IMR-90 (cell line): ENCODE measurements at regions of chr3 and their contacts with region 1.

Region 1: GRCh38 chr3:194315088-194315964 is 35.8 kb downstream of the CPN2 start:
- DNase-seq: peak; percentile 63
- ATAC-seq: peak; percentile 94
- H3K4me3 ChIP-seq: peak overlapping the region; percentile 35
- H3K27ac ChIP-seq: no peak overlapping the region
- H3K4me1 ChIP-seq: peaks cover 3% of the 10 kb centered on the region; the same call in 1 of the 2 replicates
- H3K27me3 ChIP-seq: peaks cover 62% of the 10 kb centered on the region
- CTCF ChIP-seq: peak; percentile 96
- POLR2A ChIP-seq: peak; percentile 67; the same call in 1 of the 2 replicates
- RAD21 ChIP-seq: peak; percentile 99

Region 2: DNA sequence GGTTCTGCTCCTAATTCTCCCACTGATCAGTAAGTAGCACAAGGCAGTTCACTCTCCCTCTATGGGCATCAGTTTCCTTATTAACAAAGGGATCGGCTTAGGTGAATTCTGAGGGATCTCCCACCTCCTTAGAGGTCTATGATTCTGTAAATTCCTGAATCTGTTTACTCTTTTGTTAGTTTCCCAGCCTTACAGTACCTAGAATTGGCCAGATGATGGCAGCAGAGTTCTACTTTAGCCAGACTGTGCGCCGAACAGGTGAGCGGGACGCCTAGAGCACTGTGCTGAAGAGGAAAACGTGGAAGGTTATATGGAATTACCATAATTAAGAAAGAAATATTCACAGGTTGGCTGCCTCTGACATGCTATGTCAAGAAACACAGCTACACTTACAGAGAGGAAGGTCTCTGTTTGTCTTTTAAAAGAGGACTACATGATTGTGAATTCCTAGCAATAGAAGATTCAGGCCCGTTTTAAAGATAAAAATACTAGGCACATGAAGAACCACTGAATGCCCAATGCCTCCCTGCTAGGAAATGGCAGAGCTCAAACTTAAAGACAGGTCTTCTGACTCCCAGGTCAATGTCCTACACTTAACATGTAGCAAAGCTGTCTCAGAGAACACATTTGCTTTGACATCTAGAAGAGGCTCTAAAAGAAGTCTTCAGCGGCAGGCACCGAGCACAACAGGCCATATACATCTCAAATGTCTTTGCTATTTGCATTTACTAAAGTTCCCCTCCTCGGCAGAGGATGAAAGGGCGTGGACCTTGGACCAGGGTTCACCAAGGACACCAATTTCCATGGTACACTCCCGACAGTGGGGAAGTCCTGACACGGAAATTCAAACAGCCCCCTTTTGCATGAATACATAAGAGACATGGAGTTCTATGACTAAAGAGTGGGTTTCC is 1847.8 kb before region 1 on chr3:
- CTCF ChIA-PET with region 1: no interaction called
- POLR2A ChIA-PET with region 1: no interaction called
- dilution Hi-C with region 1: no loop called
- in situ Hi-C with region 1: no loop called
- intact Hi-C with region 1: loop called (anchors 10 kb)
- DNase-seq: peak; percentile 34
- ATAC-seq: peak; percentile 90
- H3K4me3 ChIP-seq: no peak overlapping the region
- H3K27ac ChIP-seq: no peak overlapping the region
- H3K4me1 ChIP-seq: no peaks in the 10 kb centered on the region
- H3K27me3 ChIP-seq: no peaks in the 10 kb centered on the region
- CTCF ChIP-seq: peak; percentile 72
- POLR2A ChIP-seq: no peak
- RAD21 ChIP-seq: peak; percentile 74

Region 3: DNA sequence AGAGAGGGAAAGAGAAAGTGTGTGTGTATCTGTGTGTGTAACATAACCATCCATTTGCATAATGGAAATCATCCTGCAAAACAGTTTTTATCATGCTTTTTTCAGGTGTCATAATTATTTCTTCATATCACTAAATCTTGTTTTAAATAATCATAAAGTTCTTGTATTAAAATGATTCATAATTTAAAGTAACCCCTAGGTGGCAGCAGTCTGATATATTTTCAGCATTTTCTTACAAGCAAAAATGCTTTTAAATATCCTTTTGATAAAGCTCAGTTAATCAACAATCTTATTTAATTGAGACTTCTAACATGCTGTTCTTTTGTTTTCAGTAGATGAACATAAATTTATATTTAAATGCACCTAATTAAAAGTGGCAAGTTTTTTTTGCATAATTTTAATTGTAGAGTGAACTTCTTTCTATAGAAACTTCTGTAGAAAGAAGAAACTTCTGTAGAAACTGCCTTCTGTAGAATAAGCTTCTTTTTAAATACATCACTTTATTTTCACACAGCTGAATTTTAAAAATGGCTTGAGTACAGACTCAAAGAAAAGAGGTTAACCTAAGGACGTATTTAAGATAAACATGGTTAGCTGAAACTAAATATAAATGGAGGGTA is 649.8 kb before region 1 on chr3:
- CTCF ChIA-PET with region 1: interaction called, 9 read pairs
- POLR2A ChIA-PET with region 1: no interaction called
- dilution Hi-C with region 1: no loop called
- in situ Hi-C with region 1: loop called (anchors 10 kb)
- intact Hi-C with region 1: loop called (anchors 1 kb)
- DNase-seq: peak; percentile 54
- ATAC-seq: no peak
- H3K4me3 ChIP-seq: no peak overlapping the region
- H3K27ac ChIP-seq: no peak overlapping the region
- H3K4me1 ChIP-seq: no peaks in the 10 kb centered on the region
- H3K27me3 ChIP-seq: no peaks in the 10 kb centered on the region
- CTCF ChIP-seq: peak; percentile 48
- POLR2A ChIP-seq: no peak
- RAD21 ChIP-seq: peak; percentile 35; the same call in 1 of the 2 replicates

Region 4: DNA sequence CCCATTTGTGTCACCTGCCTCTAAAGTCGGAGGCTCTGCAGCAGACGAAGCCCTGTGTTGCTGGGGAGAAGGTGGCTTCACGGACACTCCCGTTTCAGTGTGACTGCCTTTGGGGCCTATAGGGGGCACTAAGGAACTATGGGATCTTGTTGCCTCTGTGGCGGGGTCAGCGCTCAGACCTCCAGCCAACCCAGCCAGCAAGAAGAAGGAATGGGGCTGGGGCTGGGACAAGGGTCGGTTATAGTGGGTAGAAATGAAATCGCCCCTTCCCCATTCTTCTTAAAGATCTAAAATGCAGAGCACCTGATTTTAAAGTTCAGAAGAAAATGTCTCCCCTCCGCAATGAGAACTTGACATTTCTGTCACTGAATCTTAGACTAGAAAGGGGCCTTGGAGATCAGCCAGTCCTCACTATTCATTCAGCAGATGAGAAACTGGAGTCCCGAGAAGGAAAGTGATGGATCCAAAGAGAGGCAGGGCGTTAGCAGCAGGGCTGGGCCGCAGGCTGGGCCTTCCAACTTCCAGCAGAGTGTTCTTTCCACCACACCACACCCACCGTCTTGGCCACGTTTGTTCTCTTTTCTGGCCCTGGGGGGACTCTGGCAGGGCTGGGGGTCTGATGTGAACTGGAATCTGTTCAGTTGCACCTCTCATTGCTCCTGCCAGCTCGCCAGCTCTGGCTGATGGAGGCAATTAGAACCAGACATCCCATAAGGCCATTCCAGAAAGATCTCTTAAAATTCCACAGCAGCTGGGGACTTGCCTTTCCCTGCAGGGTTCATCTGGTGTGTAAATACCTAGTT is 526.9 kb before region 1 on chr3:
- CTCF ChIA-PET with region 1: interaction called, 83 read pairs
- POLR2A ChIA-PET with region 1: no interaction called
- dilution Hi-C with region 1: no loop called
- in situ Hi-C with region 1: loop called (anchors 5 kb)
- intact Hi-C with region 1: loop called (anchors 1 kb)
- DNase-seq: peak; percentile 53
- ATAC-seq: peak; percentile 95
- H3K4me3 ChIP-seq: no peak overlapping the region
- H3K27ac ChIP-seq: no peak overlapping the region
- H3K4me1 ChIP-seq: no peaks in the 10 kb centered on the region
- H3K27me3 ChIP-seq: peaks cover 46% of the 10 kb centered on the region
- CTCF ChIP-seq: peak; percentile 76
- POLR2A ChIP-seq: no peak
- RAD21 ChIP-seq: peak; percentile 93

Region 5: GRCh38 chr3:194070634-194071409 is 244.5 kb before region 1 on chr3:
- CTCF ChIA-PET with region 1: no interaction called
- POLR2A ChIA-PET with region 1: no interaction called
- dilution Hi-C with region 1: no loop called
- in situ Hi-C with region 1: no loop called
- intact Hi-C with region 1: loop called (anchors 5 kb)
- DNase-seq: peak; percentile 87
- ATAC-seq: peak; percentile 86
- H3K4me3 ChIP-seq: peak overlapping the region; percentile 46
- H3K27ac ChIP-seq: no peak overlapping the region; the same call in 1 of the 2 replicates
- H3K4me1 ChIP-seq: peaks cover 2% of the 10 kb centered on the region; the same call in 1 of the 2 replicates
- H3K27me3 ChIP-seq: peaks cover 26% of the 10 kb centered on the region
- CTCF ChIP-seq: no peak
- POLR2A ChIP-seq: no peak
- RAD21 ChIP-seq: peak; percentile 26; the same call in 1 of the 2 replicates

Region 6: DNA sequence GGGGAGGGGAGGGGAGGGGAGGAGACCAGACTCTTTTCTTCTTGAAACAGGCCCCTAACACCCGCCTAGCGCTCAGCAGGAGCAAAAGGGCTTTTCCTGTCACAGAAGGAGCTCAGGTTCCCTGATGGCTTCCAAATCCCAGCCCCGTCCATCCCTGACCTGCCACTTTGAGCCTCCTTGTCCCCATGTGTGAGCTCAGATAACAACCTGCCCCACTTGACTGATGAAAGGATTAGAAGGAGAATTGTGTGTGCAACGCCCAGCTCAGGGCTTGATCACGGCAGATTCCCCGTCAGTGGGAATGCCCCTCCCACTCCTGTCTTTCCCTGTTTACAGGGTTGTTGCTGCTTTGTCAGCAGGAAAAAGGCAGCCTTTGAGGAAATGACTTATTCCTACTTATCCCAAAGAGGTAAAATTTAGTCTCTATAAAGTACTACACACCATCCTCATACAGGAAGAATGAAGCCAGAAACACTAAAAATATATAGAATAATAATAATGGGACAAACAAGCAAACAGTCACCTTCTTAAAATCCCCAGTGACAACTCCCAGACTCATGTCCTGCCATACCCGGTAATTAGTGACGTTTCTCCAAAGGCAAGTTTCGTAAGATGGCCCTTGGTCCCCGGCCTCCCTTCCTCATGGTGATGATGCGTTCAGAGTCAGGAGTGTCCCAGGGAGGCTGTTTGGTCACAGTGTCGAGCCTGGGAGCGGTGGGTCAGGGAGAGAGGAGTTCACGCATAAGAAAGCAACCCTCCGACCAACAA is 60.3 kb after region 1 on chr3:
- CTCF ChIA-PET with region 1: no interaction called
- POLR2A ChIA-PET with region 1: no interaction called
- dilution Hi-C with region 1: no loop called
- in situ Hi-C with region 1: no loop called
- intact Hi-C with region 1: no loop called
- DNase-seq: no peak
- ATAC-seq: no peak
- H3K4me3 ChIP-seq: no peak overlapping the region
- H3K27ac ChIP-seq: no peak overlapping the region
- H3K4me1 ChIP-seq: no peaks in the 10 kb centered on the region
- H3K27me3 ChIP-seq: peaks cover 18% of the 10 kb centered on the region
- CTCF ChIP-seq: no peak
- POLR2A ChIP-seq: no peak
- RAD21 ChIP-seq: no peak

Region 7: GRCh38 chr3:194782698-194783404 is 467.5 kb after region 1 on chr3:
- CTCF ChIA-PET with region 1: no interaction called
- POLR2A ChIA-PET with region 1: no interaction called
- dilution Hi-C with region 1: no loop called
- in situ Hi-C with region 1: no loop called
- intact Hi-C with region 1: no loop called
- DNase-seq: peak; percentile 4
- ATAC-seq: peak; percentile 32
- H3K4me3 ChIP-seq: no peak overlapping the region
- H3K27ac ChIP-seq: no peak overlapping the region
- H3K4me1 ChIP-seq: no peaks in the 10 kb centered on the region
- H3K27me3 ChIP-seq: peaks cover 21% of the 10 kb centered on the region
- CTCF ChIP-seq: no peak
- POLR2A ChIP-seq: no peak
- RAD21 ChIP-seq: no peak